Cardiac septum (tissue), 1 donor: ENCODE measurements at regions of chr4 and their contacts with region 1.

Region 1: GRCh38 chr4:12409507-12410190 is 981.0 kb upstream of the HS3ST1 start:
- DNase-seq: no peak

Region 2: DNA sequence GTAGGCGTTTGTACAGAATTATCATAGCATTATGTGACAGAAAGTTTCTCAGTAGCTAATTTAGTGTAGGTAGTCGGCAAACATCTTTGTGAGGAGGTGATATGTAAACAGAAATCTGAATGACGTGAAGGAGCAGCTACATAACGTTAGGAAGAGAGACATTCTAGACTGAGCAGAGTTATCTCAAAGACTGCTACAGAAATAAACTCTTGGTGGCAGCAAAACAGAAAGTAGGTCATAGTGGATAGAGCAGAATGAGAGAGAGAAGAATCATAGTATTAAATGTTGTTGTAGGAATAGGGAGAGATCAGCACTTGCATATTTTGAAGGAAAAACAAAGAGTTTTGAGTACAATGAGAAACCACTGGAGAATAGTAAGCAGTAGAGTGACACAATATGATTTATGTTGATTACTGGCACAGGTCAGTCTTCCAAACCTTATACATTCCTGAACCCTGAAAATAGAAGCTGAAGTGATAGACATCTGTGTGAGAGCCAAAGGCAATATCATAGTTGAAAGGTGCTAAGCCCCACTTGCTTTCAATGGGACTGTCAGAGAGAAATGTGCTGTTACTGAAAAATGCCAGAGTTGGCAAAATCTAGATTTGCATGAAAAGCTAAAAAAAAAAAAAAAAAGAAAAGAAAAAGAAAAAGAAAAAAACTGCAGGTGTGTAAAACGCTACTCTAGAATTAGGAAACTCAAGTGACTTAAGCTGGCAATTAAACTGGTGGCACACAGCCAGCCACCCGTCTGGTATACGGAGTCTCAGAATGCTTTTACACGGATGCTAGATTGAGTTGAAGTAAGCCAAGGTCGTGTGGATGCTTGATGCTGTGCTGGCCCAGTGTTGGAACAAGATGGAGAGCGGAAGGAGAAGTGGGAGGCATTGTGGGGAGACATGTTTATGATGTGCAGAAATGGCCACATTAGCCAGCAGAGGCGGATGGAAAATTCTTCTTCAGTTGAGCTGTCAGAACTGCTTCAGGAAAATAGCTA is 230.7 kb before region 1 on chr4:
- intact Hi-C with region 1: loop called (anchors 10 kb)
- DNase-seq: no peak